ENCODE measurements at regions of chr2 and their contacts with region 1.

Region 1: GRCh38 chr2:216519154-216519762 is 20.6 kb downstream of the RPL37A start:
- DNase-seq: peak; percentile 88
- H3K4me3 ChIP-seq: no peak overlapping the region
- H3K27ac ChIP-seq: no peak overlapping the region
- H3K4me1 ChIP-seq: peaks cover 12% of the 10 kb centered on the region
- H3K27me3 ChIP-seq: no peaks in the 10 kb centered on the region
- CTCF ChIP-seq: peak; percentile 86

Region 2: DNA sequence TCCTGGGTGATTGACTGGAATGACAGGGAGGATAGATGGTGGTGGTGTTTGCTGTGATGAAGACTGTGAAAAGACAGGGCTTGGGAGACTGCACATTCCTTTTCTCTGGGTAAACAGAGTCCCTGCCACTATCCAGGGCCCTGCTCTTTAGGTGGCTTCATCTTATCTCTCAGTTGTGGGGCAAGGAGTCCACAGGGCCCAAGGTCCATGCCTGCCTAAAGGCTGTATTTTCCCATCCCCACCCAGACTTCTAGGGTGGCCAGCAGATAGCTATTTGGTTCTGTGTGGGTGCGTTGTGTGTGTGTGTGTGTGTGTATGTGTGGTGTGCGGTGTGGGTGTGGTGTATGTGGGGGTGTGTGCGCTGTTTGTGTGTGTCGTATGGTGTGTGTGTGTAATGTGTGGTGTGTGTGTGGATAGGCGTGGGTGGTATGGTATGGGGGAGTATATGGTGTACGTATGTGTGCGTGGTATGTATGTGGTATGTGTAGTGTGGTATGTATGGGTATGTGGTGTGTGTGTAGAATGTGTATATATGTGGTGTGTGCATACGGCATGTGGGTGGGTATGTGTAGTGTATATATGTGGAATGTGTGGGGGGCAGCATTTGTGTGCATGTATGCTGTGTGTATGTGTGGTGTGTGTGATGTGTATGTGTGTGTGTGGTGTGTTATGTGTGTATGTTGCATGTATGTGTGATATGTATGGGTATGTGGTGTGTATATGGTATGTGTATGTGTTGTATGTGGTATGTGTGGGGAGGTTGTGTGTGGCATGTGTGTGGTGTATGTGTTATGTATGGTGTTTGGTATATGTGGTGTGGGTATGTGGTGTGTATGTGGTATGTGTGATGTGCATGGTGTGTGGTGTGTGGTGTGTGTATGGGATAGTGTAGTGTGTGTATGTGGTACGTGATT is 420.6 kb before region 1 on chr2:
- CTCF ChIA-PET with region 1: no interaction called
- POLR2A ChIA-PET with region 1: no interaction called
- intact Hi-C with region 1: no loop called
- DNase-seq: no peak
- H3K4me3 ChIP-seq: no peak overlapping the region
- H3K27ac ChIP-seq: no peak overlapping the region
- H3K4me1 ChIP-seq: no peaks in the 10 kb centered on the region
- H3K27me3 ChIP-seq: no peaks in the 10 kb centered on the region
- CTCF ChIP-seq: no peak

Region 3: GRCh38 chr2:216257089-216257488 is 262.2 kb before region 1 on chr2:
- CTCF ChIA-PET with region 1: no interaction called
- POLR2A ChIA-PET with region 1: no interaction called
- intact Hi-C with region 1: no loop called
- DNase-seq: no peak
- H3K4me3 ChIP-seq: no peak overlapping the region
- H3K27ac ChIP-seq: no peak overlapping the region
- H3K4me1 ChIP-seq: no peaks in the 10 kb centered on the region
- H3K27me3 ChIP-seq: no peaks in the 10 kb centered on the region
- CTCF ChIP-seq: no peak

Region 4: DNA sequence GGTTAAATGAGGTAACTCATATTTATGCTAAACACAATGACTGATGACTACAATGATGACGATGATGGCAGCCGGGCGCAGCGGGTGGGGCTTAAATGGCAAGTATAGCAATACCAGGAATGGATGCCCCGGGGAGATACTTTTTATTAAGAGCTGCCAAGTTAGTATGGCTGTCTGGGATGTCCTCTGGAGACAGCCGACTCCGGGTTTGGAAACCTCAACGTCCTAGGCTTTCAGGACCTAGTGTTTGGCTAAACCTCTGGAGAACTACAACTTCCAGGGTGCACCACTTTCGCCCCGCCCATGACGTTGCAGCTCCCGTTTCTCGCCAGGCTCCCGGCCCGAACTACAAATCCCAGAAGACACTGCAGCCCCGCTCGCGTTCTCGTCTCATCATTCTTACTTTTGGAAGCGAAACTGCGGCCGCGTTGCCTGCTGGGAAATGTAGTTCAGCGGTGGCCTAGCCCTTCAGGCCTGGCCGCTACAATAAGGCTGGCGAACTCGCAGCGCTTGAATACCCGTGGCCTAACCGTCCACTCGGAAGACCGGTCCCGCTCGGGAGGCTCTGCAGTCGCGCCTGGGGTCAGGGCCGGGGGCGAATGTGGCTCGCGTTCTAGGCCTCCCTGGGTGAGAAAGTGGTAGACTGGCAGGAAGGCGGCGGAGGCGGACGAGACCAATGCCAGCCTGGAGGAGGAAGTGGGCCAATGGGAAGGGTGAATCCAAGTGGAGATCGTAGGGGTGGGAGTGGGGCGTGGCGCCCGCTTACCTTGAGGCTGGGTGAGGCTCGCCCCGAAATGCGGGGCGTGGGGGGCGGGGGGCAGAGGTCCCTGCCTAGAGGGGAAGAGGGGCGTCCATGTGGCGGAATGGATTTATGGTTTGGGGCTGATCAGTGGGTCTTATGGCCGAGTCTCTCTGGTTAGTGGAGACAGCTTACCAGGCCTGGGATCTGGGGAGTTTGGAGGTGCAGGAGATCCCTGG is 106.9 kb before region 1 on chr2 and contains the start of gene SMARCAL1:
- CTCF ChIA-PET with region 1: no interaction called
- POLR2A ChIA-PET with region 1: no interaction called
- intact Hi-C with region 1: no loop called
- DNase-seq: peak; percentile 99
- H3K4me3 ChIP-seq: peak within 1 kb of the TSS; percentile 78
- H3K27ac ChIP-seq: peak within 1 kb of the TSS; percentile 97
- H3K4me1 ChIP-seq: no peaks in the 10 kb centered on the region
- H3K27me3 ChIP-seq: no peaks in the 10 kb centered on the region
- CTCF ChIP-seq: no peak
- total RNA-seq, gene SMARCAL1: 20.7 and 21.4 TPM in 2 replicates

Region 5: GRCh38 chr2:216467845-216468244 is 51.4 kb before region 1 on chr2:
- CTCF ChIA-PET with region 1: interaction called, 13 read pairs
- POLR2A ChIA-PET with region 1: no interaction called
- intact Hi-C with region 1: no loop called
- DNase-seq: no peak
- H3K4me3 ChIP-seq: no peak overlapping the region
- H3K27ac ChIP-seq: no peak overlapping the region
- H3K4me1 ChIP-seq: no peaks in the 10 kb centered on the region
- H3K27me3 ChIP-seq: no peaks in the 10 kb centered on the region
- CTCF ChIP-seq: no peak

Region 6: DNA sequence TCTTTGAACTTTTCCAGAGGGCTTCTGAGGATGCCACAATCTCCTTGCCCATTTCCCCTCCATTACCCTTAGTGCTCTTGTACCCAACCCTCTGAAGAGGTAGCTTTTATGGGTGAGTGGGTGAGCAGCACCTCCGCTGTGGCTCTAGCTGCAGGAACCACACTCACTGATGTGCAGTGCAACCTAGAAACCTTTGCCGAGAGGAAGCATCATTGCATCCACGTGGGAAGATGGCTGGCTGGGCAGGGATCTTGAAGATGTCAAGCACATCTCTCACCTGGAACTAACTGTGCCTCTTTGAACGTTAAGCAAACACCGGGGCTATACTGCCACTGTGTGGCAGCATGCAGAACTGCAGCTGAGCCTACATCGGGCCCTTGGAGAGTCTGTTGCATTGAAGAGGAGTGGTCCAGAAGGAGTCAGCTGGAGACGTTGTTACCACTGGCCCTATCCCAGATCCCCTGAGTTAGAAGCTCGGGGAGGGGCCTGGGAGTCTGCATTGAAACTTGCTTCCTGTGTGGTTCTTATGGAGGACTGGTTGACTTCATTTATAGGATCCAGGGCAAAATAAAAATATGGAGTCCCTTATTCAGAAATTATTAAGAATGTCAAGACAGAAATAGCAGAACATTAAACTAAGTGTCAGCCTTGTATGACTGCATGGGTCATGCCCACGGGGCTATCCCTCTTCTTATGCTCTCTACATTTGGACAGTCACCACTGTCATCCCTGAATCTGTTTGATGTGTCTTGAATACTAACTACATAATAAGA is 147.4 kb after region 1 on chr2:
- CTCF ChIA-PET with region 1: interaction called, 50 read pairs
- POLR2A ChIA-PET with region 1: no interaction called
- intact Hi-C with region 1: loop called (anchors 1 kb)
- DNase-seq: peak; percentile 82
- H3K4me3 ChIP-seq: no peak overlapping the region
- H3K27ac ChIP-seq: no peak overlapping the region
- H3K4me1 ChIP-seq: peaks cover 12% of the 10 kb centered on the region
- H3K27me3 ChIP-seq: no peaks in the 10 kb centered on the region
- CTCF ChIP-seq: peak; percentile 99

Region 7: GRCh38 chr2:217127744-217128143 is 608.5 kb after region 1 on chr2:
- CTCF ChIA-PET with region 1: no interaction called
- POLR2A ChIA-PET with region 1: no interaction called
- intact Hi-C with region 1: no loop called
- DNase-seq: no peak
- H3K4me3 ChIP-seq: no peak overlapping the region
- H3K27ac ChIP-seq: no peak overlapping the region
- H3K4me1 ChIP-seq: no peaks in the 10 kb centered on the region
- H3K27me3 ChIP-seq: no peaks in the 10 kb centered on the region
- CTCF ChIP-seq: no peak

Region 8: GRCh38 chr2:217517402-217517801 is 998.1 kb after region 1 on chr2:
- CTCF ChIA-PET with region 1: no interaction called
- POLR2A ChIA-PET with region 1: no interaction called
- intact Hi-C with region 1: loop called (anchors 2 kb)
- DNase-seq: no peak
- H3K4me3 ChIP-seq: no peak overlapping the region
- H3K27ac ChIP-seq: no peak overlapping the region
- H3K4me1 ChIP-seq: no peaks in the 10 kb centered on the region
- H3K27me3 ChIP-seq: no peaks in the 10 kb centered on the region
- CTCF ChIP-seq: no peak